GM18951 (cell line): ENCODE measurements at regions of chr2 and their contacts with region 1.

Region 1: GRCh38 chr2:62774555-62775366 is 69.2 kb downstream of the EHBP1 start:
- POLR2A ChIP-seq: no peak

Region 2: GRCh38 chr2:61905372-61906185 is 869.2 kb before region 1 on chr2 and contains the start of gene COMMD1:
- in situ Hi-C with region 1: loop called (anchors 25 kb)
- POLR2A ChIP-seq: peak; percentile 93

Region 3: GRCh38 chr2:61993444-61994024 is 781.2 kb before region 1 on chr2:
- in situ Hi-C with region 1: loop called (anchors 25 kb)
- POLR2A ChIP-seq: no peak

Region 4: DNA sequence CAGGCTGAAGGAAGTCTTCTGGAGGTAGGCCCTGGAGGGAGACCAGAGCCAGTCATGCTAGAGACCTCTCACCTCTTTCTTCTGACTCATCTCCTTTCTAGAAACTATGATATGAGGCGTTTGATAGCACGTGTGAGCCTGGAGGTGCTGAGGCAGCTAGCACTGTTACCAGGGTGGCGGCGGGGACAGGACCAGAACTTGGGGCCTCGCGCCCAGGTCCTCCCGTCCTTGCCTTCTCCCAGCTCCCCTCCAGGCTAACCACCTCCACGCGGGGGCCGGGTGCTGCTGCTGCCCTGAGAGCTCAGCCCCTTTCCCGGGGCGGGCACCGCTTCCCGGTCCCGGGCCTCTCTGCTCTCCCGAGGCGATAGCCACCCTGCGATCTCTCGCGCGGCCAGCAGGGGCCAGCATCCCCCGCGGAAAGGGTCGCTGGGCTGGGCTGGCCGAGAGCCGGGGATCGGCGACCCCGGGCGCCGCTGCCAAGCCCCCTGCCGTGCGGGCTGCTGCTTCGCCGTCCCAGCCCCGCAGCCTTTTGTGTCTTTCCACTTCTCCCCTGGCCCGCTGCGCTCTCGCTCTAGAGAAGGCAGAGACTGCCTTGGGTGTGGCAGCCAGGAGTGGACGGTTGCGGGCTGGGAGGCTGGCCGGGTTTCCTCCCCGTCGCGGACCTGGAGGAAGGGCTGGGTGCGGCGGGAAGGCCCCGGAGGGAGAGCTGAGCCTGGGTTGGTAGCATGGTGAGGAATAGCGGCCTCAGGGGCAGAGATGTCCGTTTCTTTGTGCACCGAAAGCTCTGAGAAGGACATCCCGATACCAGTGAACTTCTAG is 317.8 kb before region 1 on chr2:
- in situ Hi-C with region 1: loop called (anchors 5 kb)
- POLR2A ChIP-seq: no peak

Region 5: GRCh38 chr2:63488118-63488713 is 713.5 kb after region 1 on chr2:
- in situ Hi-C with region 1: loop called (anchors 25 kb)
- POLR2A ChIP-seq: no peak